Prostate gland (tissue), 2 donors: ENCODE measurements at regions of chr3 and their contacts with region 1.

Region 1: GRCh38 chr3:177359593-177360357 is 162.5 kb upstream of the TBL1XR1 start:
- DNase-seq: peak; percentile 95
- H3K4me3 ChIP-seq: peak overlapping the region; percentile 2 to 29
- H3K27ac ChIP-seq: peak overlapping the region; percentile 75 to 88
- H3K4me1 ChIP-seq: peaks cover 26% of the 10 kb centered on the region
- H3K27me3 ChIP-seq: no peaks in the 10 kb centered on the region
- CTCF ChIP-seq: peak in 1 of 4 experiments; percentile 18
- POLR2A ChIP-seq: peak; percentile 41

Region 2: GRCh38 chr3:177197041-177197727 is 162.6 kb before region 1 on chr3 and contains the start of gene TBL1XR1:
- intact Hi-C with region 1: loop called (anchors 1 kb)
- DNase-seq: peak; percentile 91
- H3K4me3 ChIP-seq: peak within 1 kb of the TSS; percentile 86 to 100
- H3K27ac ChIP-seq: peak within 1 kb of the TSS; percentile 97 to 99
- H3K4me1 ChIP-seq: no peaks in the 10 kb centered on the region
- H3K27me3 ChIP-seq: no peaks in the 10 kb centered on the region
- CTCF ChIP-seq: no peak
- POLR2A ChIP-seq: no peak
- total RNA-seq, gene TBL1XR1: 75.8 to 156 TPM

Region 3: DNA sequence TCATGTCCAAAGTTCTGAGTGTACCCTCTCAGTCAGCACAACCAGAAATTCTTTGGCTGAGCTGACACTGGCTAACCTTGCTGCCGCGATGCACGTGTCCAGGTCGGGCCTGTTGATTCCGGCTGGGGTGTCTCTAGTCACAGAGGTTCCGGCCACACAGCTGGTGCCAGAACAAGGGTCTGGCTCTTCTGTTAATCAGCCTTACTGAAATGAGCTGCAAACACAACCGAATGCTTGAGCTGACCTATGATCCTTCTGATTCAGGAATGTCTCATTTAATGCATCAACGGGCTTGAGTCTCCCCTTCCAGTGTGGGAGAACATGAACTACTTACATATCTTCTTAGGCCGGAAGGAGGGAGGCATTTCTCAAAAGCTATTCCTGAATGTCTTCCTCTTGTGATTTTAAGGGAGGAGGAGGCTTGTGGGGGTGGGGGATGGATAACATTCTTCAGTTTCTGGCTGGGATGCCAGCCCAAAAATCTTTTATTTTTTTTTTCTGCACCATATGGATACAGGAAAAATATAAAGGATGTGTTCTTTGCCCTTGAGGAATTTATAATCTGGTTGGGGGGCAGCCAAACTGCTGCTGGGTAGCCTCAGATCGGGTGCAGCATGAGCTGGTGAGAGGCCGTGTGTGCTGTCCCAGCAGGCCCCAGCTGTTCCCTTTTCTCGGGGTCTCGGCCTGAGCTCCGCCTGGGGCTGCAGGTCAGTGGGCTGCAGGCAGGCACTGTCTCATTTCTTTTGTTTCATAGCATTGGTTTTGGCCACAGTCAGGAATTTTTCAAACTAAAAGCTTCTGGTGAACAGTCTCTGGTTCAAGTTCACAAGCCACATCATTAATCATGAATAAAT is 156.6 kb after region 1 on chr3:
- intact Hi-C with region 1: loop called (anchors 5 kb)
- DNase-seq: no peak
- H3K4me3 ChIP-seq: no peak overlapping the region
- H3K27ac ChIP-seq: peak overlapping the region in 1 of 2 donors; percentile 17
- H3K4me1 ChIP-seq: peaks cover 4% of the 10 kb centered on the region
- H3K27me3 ChIP-seq: no peaks in the 10 kb centered on the region
- CTCF ChIP-seq: no peak
- POLR2A ChIP-seq: no peak

Region 4: GRCh38 chr3:178078953-178079352 is 719.2 kb after region 1 on chr3:
- intact Hi-C with region 1: loop called (anchors 10 kb)
- DNase-seq: no peak
- H3K4me3 ChIP-seq: no peak overlapping the region
- H3K27ac ChIP-seq: peak overlapping the region in 1 of 2 donors; percentile 3
- H3K4me1 ChIP-seq: peaks cover 9% of the 10 kb centered on the region
- H3K27me3 ChIP-seq: no peaks in the 10 kb centered on the region
- CTCF ChIP-seq: no peak
- POLR2A ChIP-seq: no peak

Region 5: DNA sequence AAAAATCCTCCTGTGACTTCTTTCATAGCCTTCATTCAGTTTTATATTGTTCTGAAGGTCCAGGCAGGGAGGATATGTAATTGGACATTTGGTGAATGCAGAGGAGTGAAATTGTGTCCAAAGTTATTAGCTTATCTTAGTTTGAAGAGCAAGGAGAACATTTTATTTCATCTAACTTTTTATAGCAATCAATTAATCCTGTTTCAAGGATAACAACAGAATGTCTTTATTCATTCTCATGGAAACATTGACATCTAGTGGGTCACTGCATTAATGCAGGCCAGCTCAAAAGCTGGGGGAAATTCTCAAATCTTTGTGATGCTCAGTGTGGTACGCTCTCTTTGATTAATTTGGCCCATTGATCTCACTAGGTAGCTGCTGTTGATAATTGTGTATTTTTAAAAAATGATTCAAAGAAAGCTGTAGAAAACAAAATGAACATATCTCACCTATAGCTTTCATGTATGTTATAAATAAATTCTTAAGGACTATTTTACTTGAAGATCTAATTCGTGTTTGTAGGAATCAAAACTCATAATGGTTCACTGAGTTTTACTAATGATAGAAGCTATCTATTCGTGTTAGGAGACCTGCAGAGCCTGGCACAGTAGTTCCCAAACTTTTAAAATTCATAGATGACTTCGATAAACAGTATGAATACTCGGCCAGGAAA is 1025.6 kb after region 1 on chr3:
- intact Hi-C with region 1: loop called (anchors 10 kb)
- DNase-seq: peak; percentile 33
- H3K4me3 ChIP-seq: peak overlapping the region in 1 of 2 donors; percentile 1
- H3K27ac ChIP-seq: peak overlapping the region; percentile 38 to 47
- H3K4me1 ChIP-seq: no peaks in the 10 kb centered on the region
- H3K27me3 ChIP-seq: no peaks in the 10 kb centered on the region
- CTCF ChIP-seq: peak; percentile 65 to 93 (median 82)
- POLR2A ChIP-seq: no peak